ENCODE measurements at regions of chr17 and their contacts with region 1.

Region 1: DNA sequence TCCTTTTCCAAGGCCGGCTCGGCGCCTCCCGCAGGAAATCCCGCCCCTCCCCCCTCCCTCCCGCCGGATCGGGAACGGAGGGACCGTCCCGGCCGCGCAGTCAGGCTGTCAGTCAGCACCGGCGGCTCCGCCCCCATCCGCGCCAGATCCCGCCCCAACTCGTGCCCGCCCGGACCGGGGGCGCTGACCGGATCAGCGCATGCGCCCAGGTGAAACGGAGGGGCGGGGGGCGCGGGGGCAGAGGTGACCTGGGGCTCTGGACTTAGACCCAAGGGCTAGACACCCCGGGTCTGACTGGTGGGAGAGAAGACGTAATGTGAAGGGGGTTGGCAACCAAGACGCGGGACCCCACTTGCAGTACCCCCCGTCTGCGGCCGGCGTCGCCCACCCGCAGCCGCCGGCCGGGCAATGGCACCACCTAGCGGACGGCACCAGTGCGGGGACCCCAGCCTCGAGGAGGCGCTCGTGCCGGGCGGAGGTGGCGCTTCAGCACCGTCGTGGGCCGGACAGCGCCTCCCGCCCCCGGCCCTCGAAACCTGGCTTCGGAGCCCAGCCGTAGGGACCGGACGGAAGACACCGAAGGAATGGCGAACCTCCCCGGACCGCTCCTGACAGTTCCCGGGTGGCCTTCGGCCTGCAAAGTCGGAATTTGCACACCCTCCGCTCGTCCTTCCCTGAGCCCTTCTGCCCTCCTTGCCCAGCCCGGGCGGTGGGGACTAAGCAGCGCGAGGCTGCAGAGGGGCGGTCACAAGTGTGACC is at the start of gene CASKIN2:
- DNase-seq: peak; percentile 97
- ATAC-seq: peak; percentile 89 to 93
- total RNA-seq, gene CASKIN2: 37.7 to 60.2 TPM

Region 2: DNA sequence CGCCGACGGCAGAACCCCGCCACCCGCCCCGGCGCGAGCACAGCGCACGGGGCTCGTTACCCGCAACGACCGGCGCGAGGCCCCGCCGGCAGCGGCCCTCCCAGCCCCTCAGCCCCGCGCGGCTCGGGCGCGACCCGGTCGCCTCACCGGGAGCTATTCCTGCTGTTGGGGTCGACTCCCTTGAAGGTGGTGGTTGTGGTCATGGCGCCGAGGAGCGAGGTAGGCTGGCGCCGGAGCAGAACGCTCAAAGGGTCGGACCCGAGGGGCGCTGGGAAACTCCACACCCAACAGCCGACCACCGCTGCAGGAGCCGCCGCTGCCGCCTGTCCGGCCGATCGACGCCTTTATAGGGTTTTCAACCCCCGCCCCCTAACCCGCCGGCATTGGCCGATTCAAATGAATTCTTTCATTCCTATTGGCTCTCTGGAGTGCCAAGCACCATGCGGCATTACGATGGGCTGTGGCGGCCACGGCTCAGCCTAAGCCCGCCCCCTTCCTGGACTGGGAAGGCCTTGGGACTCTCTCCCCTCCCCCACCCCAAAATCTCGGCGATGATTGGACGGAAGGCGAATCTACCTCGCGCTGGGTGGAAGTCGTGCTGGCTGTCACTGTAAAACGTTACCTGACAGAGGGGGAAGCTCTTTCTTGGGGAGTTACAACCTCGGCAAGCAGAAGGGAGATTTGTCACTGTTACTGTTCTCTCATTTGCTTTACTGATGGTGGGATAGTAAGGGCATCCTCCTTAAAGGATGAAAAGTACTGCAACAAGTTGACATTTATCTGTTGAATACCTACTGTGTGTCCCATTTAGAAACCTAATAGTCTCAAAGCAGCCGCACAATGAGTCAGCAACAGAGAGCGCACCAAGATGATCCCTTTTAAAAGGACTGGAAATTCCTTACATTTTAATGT is 361.2 kb before region 1 on chr17 and contains the start of gene JPT1:
- intact Hi-C with region 1: no loop called
- DNase-seq: peak; percentile 99
- ATAC-seq: peak; percentile 100
- total RNA-seq, gene JPT1: 16.4 to 19.7 TPM

Region 3: DNA sequence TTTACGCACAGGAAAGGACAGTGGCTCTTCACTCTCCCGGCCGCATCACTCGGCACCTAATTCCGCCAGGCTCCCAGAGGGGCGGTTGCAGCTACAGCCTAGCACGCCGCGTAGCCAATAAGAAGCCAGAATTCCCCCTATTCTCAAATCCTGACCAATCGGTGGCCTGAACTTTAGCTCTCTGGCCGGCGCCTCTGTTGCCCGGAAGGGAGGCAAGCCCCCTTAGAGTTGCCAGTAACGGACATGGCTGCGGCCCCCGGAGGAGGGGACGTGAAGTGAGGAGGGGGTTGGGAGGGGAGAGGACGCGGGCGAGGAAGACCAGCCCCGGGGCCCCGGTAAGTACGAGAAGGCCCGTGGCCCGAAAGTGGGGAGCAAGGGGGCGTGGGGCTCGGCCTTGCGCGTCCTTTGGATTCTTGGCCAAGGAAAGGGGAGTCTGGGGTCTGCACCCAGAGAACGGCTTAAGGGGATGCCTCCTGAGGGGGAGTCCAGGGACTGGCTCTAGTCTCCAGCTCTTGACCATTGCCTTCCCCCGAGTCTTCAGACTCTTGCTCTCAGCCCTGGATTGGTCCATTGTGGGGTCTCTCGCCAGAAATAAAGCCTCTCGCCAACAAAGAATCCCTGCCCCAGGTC is 59.1 kb before region 1 on chr17 and contains the start of gene TMEM94:
- intact Hi-C with region 1: loop called in 1 of 2 experiments (anchors 10 kb)
- DNase-seq: peak; percentile 95
- ATAC-seq: peak; percentile 98 to 99
- total RNA-seq, gene TMEM94: 46.0 to 47.2 TPM

Measured in left cardiac atrium (tissue), 4 donors.